ENCODE measurements at regions of chr6 and their contacts with region 1.

Region 1: GRCh38 chr6:76697585-76697984 is 625.1 kb upstream of the IMPG1 start:
- DNase-seq: peak; percentile 18
- ATAC-seq: peak; percentile 35; the same call in 1 of the 2 replicates
- H3K4me3 ChIP-seq: no peak overlapping the region
- H3K27ac ChIP-seq: no peak overlapping the region
- H3K4me1 ChIP-seq: no peaks in the 10 kb centered on the region
- H3K27me3 ChIP-seq: no peaks in the 10 kb centered on the region
- CTCF ChIP-seq: peak; percentile 39
- POLR2A ChIP-seq: no peak
- RAD21 ChIP-seq: peak; percentile 48

Region 2: DNA sequence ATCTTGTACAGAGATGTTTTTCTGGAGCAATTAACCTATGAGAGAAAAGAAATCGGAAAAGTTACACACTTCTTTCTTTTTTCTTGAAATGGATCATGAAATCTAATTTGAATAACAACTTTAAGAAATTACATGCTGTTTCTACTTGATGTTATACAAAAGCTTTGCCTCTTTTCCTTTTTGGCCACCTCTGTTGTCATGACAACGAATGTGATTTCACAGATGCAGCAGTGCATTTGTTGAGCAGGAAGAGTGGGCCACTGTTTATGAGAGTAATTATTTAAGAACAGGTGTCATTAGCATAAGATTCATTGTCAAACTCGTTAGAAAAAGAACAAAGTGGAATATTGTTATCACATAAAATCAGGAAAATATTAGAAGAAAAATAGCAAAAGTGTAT is 476.8 kb before region 1 on chr6:
- CTCF ChIA-PET with region 1: interaction called, 10 read pairs
- POLR2A ChIA-PET with region 1: no interaction called
- dilution Hi-C with region 1: no loop called
- in situ Hi-C with region 1: no loop called
- intact Hi-C with region 1: no loop called
- DNase-seq: no peak
- ATAC-seq: no peak
- H3K4me3 ChIP-seq: no peak overlapping the region
- H3K27ac ChIP-seq: no peak overlapping the region
- H3K4me1 ChIP-seq: no peaks in the 10 kb centered on the region
- H3K27me3 ChIP-seq: no peaks in the 10 kb centered on the region
- CTCF ChIP-seq: no peak
- POLR2A ChIP-seq: no peak
- RAD21 ChIP-seq: no peak

Region 3: DNA sequence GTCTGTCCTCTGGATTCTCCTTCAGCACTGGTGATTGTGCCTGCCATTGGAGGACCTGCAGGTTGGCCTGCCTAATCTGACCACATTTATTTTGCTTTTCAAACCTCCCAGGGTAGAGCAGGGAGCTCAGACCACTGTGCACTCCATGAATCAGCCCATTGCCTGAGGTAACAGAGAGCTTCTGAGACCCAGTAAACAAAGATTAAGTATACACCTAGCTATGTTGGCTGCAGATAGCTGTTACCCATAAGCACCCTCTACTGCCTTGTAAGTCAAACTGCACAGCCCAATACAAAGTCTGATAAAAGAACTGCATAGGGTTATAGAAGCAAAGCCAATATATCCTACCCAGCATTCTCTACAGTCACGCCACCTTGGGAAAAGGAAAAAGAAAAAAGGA is 427.0 kb after region 1 on chr6:
- CTCF ChIA-PET with region 1: no interaction called
- POLR2A ChIA-PET with region 1: no interaction called
- dilution Hi-C with region 1: no loop called
- in situ Hi-C with region 1: no loop called
- intact Hi-C with region 1: loop called (anchors 10 kb)
- DNase-seq: peak; percentile 51
- ATAC-seq: peak; percentile 63
- H3K4me3 ChIP-seq: no peak overlapping the region
- H3K27ac ChIP-seq: no peak overlapping the region
- H3K4me1 ChIP-seq: no peaks in the 10 kb centered on the region
- H3K27me3 ChIP-seq: no peaks in the 10 kb centered on the region
- CTCF ChIP-seq: peak; percentile 32
- POLR2A ChIP-seq: no peak
- RAD21 ChIP-seq: peak; percentile 39

Measured in IMR-90 (cell line).